Activated B cell treated with CpG ODN at 0.5 μM for 24 hours (primary cell): ENCODE measurements at regions of chr1 and their contacts with region 1.

Region 1: GRCh38 chr1:65002508-65003315 is 36.4 kb upstream of the JAK1 start:
- DNase-seq: peak; percentile 66
- ATAC-seq: peak; percentile 81
- H3K4me3 Mint-ChIP-seq: peak overlapping the region; percentile 83
- H3K27ac Mint-ChIP-seq: peak overlapping the region; percentile 19
- H3K4me1 Mint-ChIP-seq: peaks cover 31% of the 10 kb centered on the region
- H3K27me3 Mint-ChIP-seq: no peaks in the 10 kb centered on the region
- CTCF ChIP-seq: no peak

Region 2: DNA sequence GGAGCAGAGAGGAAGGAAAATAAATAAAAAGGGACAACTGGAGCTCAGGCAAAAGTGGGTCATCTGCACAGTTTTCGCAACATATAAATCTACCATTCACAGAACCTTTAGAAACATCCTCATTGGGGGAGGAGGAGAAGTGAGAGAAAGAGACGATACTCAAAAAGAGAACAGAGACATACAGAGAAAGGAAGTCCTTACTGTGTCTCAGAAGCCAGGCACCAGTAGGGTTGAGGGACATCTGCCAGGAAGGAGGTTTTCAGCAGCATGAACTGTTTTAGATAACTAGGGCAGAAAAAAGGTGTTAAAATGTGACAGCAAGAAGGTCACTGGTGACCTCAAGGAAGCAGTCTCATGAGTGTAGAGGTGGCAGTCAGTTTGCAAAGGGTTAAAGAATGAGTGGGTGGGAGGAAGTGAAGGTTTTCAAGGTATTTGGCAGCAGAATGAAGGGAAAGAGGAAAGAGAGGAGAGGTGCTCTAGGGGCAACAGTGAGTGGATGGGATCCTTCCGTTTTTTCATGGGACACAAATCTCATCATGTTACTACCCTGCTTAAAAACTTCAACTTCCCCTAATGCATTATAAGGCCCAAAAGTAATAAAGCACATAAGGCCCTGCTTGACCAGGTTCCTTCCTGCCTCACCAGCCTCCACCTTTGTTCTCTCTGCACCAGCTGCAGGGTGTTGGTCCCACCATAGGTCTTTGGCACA is 45.8 kb before region 1 on chr1:
- CTCF ChIA-PET with region 1: interaction called, 3 read pairs
- POLR2A ChIA-PET with region 1: interaction called, 9 read pairs
- intact Hi-C with region 1: loop called (anchors 2 kb)
- DNase-seq: no peak
- ATAC-seq: peak; percentile 83
- H3K4me3 Mint-ChIP-seq: no peak overlapping the region
- H3K27ac Mint-ChIP-seq: no peak overlapping the region
- H3K4me1 Mint-ChIP-seq: peaks cover 68% of the 10 kb centered on the region
- H3K27me3 Mint-ChIP-seq: no peaks in the 10 kb centered on the region
- CTCF ChIP-seq: no peak

Region 3: DNA sequence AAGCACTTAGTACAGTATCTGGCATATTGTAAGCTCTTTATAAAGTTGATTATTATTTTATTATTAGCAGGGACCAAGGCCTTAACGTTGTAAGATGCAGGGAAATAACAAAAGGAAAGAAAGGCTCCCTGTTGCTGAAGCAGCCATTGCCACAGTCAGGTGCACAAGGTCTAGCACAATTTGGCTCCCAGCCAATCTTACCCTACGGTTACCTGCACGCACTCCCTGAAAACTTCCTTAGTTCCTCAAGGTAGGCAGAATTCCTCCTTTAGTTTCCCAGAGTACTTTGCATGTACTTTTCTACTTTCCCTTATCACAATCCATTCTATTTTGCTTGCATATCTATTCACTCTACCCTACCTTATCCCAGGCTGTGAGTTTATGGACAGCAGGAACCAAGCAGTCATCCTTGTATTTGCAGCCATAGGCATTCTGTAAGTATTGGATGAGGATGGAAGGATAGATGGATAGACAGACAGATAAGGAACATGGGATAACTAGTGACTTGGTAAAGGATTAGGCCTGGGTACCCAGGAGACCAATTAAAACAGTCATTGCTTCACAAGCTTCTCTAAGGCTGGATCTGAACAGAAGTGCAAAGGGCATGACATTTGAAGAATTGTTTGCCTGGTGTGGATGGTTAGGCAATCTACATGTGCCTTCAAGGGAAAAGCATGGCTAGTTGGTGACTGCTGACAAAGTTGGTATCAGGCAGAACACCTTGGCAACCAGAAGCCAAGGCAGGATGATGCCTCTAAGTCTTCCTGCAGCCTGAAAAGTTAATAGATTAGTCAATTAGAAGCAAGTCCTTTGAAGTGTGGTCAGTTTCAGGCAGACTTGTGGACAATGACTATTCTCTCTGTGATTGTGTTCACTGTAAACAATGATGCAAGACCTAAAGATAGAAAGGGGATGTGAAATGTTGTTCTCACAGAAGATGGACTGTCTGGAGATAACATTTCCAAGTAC is 15.5 kb before region 1 on chr1:
- CTCF ChIA-PET with region 1: no interaction called
- POLR2A ChIA-PET with region 1: interaction called, 5 read pairs
- intact Hi-C with region 1: loop called (anchors 1 kb)
- DNase-seq: no peak
- ATAC-seq: peak; percentile 42
- H3K4me3 Mint-ChIP-seq: no peak overlapping the region
- H3K27ac Mint-ChIP-seq: no peak overlapping the region
- H3K4me1 Mint-ChIP-seq: peaks cover 15% of the 10 kb centered on the region
- H3K27me3 Mint-ChIP-seq: no peaks in the 10 kb centered on the region
- CTCF ChIP-seq: no peak

Region 4: DNA sequence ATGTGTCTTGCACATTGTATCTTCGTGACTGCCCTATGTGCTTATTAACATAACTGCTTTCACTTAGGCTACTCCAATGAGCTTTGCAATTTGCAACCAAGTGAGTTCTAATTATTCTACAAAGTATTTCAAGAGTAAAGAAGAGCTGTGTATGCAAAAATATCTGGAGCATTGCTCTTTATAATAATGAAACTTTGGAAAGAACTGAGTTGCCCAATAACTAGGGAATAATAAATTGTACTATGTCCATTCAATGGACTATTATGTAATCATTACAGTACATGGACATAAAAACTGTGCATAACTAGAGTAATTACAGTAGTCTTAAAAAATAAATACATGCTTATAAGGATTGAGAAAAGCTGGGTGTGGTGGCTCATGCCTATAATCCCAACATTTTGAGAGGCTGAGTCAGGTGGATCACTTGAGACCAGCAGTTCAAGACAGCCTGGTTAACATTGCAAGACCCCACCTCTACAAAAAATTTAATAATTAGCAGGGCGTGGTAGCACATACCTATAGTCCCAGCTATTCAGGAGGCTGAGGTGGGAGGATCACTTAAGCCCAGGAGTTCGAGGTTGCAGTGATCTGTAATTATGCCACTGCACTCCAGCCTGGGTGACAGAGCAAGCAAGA is 34.0 kb after region 1 on chr1:
- CTCF ChIA-PET with region 1: no interaction called
- POLR2A ChIA-PET with region 1: no interaction called
- intact Hi-C with region 1: loop called (anchors 2 kb)
- DNase-seq: no peak
- ATAC-seq: no peak
- H3K4me3 Mint-ChIP-seq: no peak overlapping the region
- H3K27ac Mint-ChIP-seq: no peak overlapping the region
- H3K4me1 Mint-ChIP-seq: peaks cover 11% of the 10 kb centered on the region
- H3K27me3 Mint-ChIP-seq: no peaks in the 10 kb centered on the region
- CTCF ChIP-seq: no peak

Region 5: GRCh38 chr1:65067491-65068201 is 64.9 kb after region 1 on chr1:
- CTCF ChIA-PET with region 1: no interaction called
- POLR2A ChIA-PET with region 1: interaction called, 3 read pairs
- intact Hi-C with region 1: loop called (anchors 1 kb)
- DNase-seq: peak; percentile 50
- ATAC-seq: peak; percentile 15
- H3K4me3 Mint-ChIP-seq: peak overlapping the region; percentile 97
- H3K27ac Mint-ChIP-seq: peak overlapping the region; percentile 99
- H3K4me1 Mint-ChIP-seq: peaks cover 48% of the 10 kb centered on the region
- H3K27me3 Mint-ChIP-seq: no peaks in the 10 kb centered on the region
- CTCF ChIP-seq: no peak